Prostate gland (tissue), 2 donors: ENCODE measurements at regions of chrX and their contacts with region 1.

Region 1: GRCh38 chrX:16436348-16437188 is 213.4 kb upstream of the S100G start:
- DNase-seq: peak; percentile 40
- H3K4me3 ChIP-seq: no peak overlapping the region
- H3K27ac ChIP-seq: no peak overlapping the region
- H3K4me1 ChIP-seq: no peaks in the 10 kb centered on the region
- H3K27me3 ChIP-seq: no peaks in the 10 kb centered on the region
- CTCF ChIP-seq: peak in 3 of 4 experiments; percentile 22 to 46 (median 43)
- POLR2A ChIP-seq: no peak

Region 2: GRCh38 chrX:16670998-16671397 is 234.4 kb after region 1 on chrX:
- intact Hi-C with region 1: loop called (anchors 10 kb)
- DNase-seq: no peak
- H3K4me3 ChIP-seq: no peak overlapping the region
- H3K27ac ChIP-seq: no peak overlapping the region
- H3K4me1 ChIP-seq: no peaks in the 10 kb centered on the region
- H3K27me3 ChIP-seq: no peaks in the 10 kb centered on the region
- CTCF ChIP-seq: peak in 1 of 4 experiments; percentile 14
- POLR2A ChIP-seq: no peak